ENCODE measurements at regions of chr2 and their contacts with region 1.

Region 1: GRCh38 chr2:39114771-39115170 is 6.1 kb downstream of the SOS1 start:
- DNase-seq: no peak
- H3K4me3 ChIP-seq: no peak overlapping the region
- H3K27ac ChIP-seq: no peak overlapping the region
- H3K4me1 ChIP-seq: peaks cover 8 to 63% (median 19%) of the 10 kb centered on the region in 3 donors
- H3K27me3 ChIP-seq: no peaks in the 10 kb centered on the region
- CTCF ChIP-seq: no peak
- POLR2A ChIP-seq: no peak

Region 2: GRCh38 chr2:38959938-38960608 is 154.7 kb before region 1 on chr2:
- intact Hi-C with region 1: no loop called
- DNase-seq: no peak
- H3K4me3 ChIP-seq: peak overlapping the region; percentile 26 to 65 (median 44)
- H3K27ac ChIP-seq: no peak overlapping the region
- H3K4me1 ChIP-seq: peaks cover 4 to 12% (median 10%) of the 10 kb centered on the region in 3 donors
- H3K27me3 ChIP-seq: peaks cover 0 to 18% (median 0%) of the 10 kb centered on the region in 4 donors
- CTCF ChIP-seq: peak in 1 of 6 experiments; percentile 5
- POLR2A ChIP-seq: no peak

Region 3: GRCh38 chr2:39050109-39050508 is 64.7 kb before region 1 on chr2:
- intact Hi-C with region 1: no loop called
- DNase-seq: no peak
- H3K4me3 ChIP-seq: no peak overlapping the region
- H3K27ac ChIP-seq: no peak overlapping the region
- H3K4me1 ChIP-seq: no peaks in the 10 kb centered on the region
- H3K27me3 ChIP-seq: no peaks in the 10 kb centered on the region
- CTCF ChIP-seq: no peak
- POLR2A ChIP-seq: no peak

Region 4: GRCh38 chr2:39062320-39062719 is 52.5 kb before region 1 on chr2:
- intact Hi-C with region 1: loop called (anchors 5 kb)
- DNase-seq: no peak
- H3K4me3 ChIP-seq: no peak overlapping the region
- H3K27ac ChIP-seq: no peak overlapping the region
- H3K4me1 ChIP-seq: no peaks in the 10 kb centered on the region
- H3K27me3 ChIP-seq: no peaks in the 10 kb centered on the region
- CTCF ChIP-seq: no peak
- POLR2A ChIP-seq: no peak

Region 5: DNA sequence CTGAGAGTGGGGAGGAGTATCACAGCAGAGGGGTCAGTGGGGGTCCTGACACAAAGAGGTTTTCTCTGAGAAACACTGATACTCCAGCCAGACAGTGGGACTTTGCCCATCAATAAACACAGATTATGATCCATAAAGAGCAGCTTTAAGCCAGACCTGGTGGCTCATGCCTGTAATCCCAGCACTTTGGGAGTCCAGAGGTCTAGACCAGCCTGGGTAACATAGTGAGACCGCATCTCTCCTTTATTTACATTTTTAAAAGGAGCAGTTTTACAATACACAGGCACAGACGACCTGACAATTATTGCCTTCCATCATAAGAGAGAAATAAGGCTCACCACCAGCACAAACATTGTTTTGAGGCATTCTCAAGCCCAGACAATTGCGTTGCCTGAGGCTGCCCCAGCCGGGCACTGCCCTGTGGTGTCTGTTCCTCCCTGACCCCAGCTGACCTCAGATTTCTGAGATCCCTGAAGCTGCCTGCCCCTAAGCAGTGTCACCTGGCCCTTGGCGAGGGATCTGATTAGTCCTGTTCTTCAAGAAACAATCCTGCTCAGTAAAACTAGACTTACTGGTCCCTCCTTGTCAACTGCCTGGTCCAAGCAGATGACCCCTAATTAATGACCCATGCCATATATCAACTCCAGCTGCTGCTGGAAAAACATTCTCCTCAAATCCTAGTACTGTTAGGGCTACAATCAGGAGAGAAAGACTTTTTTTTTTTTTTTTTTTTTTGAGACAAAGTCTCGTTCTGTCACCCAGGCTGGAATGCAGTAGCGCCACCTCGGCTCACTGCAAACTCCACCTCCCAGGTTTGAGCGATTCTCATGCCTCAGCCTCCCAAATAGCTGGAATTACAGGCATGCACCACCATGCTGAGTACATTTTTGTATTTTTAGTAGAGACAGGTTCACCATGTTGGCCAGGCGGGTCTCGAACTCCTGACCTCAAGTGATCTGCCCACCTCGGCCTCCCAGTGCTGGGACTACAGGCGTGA is 65.5 kb after region 1 on chr2:
- intact Hi-C with region 1: no loop called
- DNase-seq: no peak
- H3K4me3 ChIP-seq: no peak overlapping the region
- H3K27ac ChIP-seq: no peak overlapping the region
- H3K4me1 ChIP-seq: peaks cover 0 to 6% (median 0%) of the 10 kb centered on the region in 3 donors
- H3K27me3 ChIP-seq: no peaks in the 10 kb centered on the region
- CTCF ChIP-seq: no peak
- POLR2A ChIP-seq: no peak

Region 6: DNA sequence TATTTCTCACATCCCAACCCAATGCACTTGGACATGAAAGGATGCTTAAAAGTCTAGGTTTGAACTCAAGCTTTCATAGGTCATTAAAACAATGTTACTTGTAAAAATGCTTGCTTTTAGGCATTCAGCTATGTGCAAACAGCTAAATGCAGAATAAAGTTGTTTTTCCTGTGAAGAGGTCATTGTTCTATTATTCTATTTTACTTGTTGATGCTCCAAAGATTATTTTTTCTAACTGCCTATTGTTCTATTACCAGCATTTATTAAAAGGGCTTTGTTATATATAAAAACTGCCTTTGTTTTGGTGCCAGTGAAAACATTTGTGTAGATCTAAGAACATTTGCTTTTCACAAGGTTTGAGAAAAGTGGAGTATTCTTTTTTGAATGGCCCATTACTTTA is 600.3 kb after region 1 on chr2:
- intact Hi-C with region 1: no loop called
- DNase-seq: no peak
- H3K4me3 ChIP-seq: no peak overlapping the region
- H3K27ac ChIP-seq: no peak overlapping the region
- H3K4me1 ChIP-seq: peaks cover 0 to 20% (median 0%) of the 10 kb centered on the region in 3 donors
- H3K27me3 ChIP-seq: no peaks in the 10 kb centered on the region
- CTCF ChIP-seq: no peak
- POLR2A ChIP-seq: no peak